Esophagus squamous epithelium (tissue), 5 donors: ENCODE measurements at regions of chrX and their contacts with region 1.

Region 1: GRCh38 chrX:23907498-23908218 is at the starts of genes APOO and CXorf58:
- DNase-seq: peak; percentile 37
- H3K4me3 ChIP-seq: peak within 1 kb of the TSS; percentile 46 to 70 (median 56)
- H3K27ac ChIP-seq: peak within 1 kb of the TSS; percentile 83 to 93 (median 88)
- H3K4me1 ChIP-seq: peaks cover 0 to 19% (median 0%) of the 10 kb centered on the region in 3 donors
- H3K27me3 ChIP-seq: no peaks in the 10 kb centered on the region
- CTCF ChIP-seq: peak; percentile 28 to 91 (median 78)
- POLR2A ChIP-seq: peak in 2 of 4 donors; percentile 13 to 22
- total RNA-seq, gene APOO: 10.5 to 25.1 (median 13.7) TPM
- total RNA-seq, gene CXorf58: 0.15 to 0.95 TPM in 2 of 4 donors, not detected in the others

Region 2: GRCh38 chrX:23694606-23695005 is 213.1 kb before region 1 on chrX:
- intact Hi-C with region 1: loop called (anchors 10 kb)
- DNase-seq: no peak
- H3K4me3 ChIP-seq: no peak overlapping the region
- H3K27ac ChIP-seq: no peak overlapping the region
- H3K4me1 ChIP-seq: no peaks in the 10 kb centered on the region
- H3K27me3 ChIP-seq: no peaks in the 10 kb centered on the region
- CTCF ChIP-seq: peak in 4 of 6 experiments; percentile 14 to 53 (median 41)
- POLR2A ChIP-seq: no peak

Region 3: GRCh38 chrX:24054182-24055042 is 146.8 kb after region 1 on chrX and contains the start of gene EIF2S3:
- intact Hi-C with region 1: loop called (anchors 10 kb)
- DNase-seq: peak; percentile 77
- H3K4me3 ChIP-seq: peak within 1 kb of the TSS in 1 of 4 donors; percentile 62
- H3K27ac ChIP-seq: peak within 1 kb of the TSS; percentile 61 to 93 (median 91)
- H3K4me1 ChIP-seq: peaks cover 0 to 7% (median 0%) of the 10 kb centered on the region in 3 donors
- H3K27me3 ChIP-seq: no peaks in the 10 kb centered on the region
- CTCF ChIP-seq: peak; percentile 29 to 68 (median 57)
- POLR2A ChIP-seq: peak in 1 of 4 donors; percentile 66
- total RNA-seq, gene EIF2S3: 70.5 to 158 (median 133) TPM